Astrocyte of the cerebellum (primary cell): ENCODE measurements at regions of chr12 and their contacts with region 1.

Region 1: GRCh38 chr12:123471374-123472068 is 13.6 kb downstream of the SNRNP35 start:
- DNase-seq: peak; percentile 18
- H3K4me3 ChIP-seq: no peak overlapping the region
- CTCF ChIP-seq: no peak

Region 2: DNA sequence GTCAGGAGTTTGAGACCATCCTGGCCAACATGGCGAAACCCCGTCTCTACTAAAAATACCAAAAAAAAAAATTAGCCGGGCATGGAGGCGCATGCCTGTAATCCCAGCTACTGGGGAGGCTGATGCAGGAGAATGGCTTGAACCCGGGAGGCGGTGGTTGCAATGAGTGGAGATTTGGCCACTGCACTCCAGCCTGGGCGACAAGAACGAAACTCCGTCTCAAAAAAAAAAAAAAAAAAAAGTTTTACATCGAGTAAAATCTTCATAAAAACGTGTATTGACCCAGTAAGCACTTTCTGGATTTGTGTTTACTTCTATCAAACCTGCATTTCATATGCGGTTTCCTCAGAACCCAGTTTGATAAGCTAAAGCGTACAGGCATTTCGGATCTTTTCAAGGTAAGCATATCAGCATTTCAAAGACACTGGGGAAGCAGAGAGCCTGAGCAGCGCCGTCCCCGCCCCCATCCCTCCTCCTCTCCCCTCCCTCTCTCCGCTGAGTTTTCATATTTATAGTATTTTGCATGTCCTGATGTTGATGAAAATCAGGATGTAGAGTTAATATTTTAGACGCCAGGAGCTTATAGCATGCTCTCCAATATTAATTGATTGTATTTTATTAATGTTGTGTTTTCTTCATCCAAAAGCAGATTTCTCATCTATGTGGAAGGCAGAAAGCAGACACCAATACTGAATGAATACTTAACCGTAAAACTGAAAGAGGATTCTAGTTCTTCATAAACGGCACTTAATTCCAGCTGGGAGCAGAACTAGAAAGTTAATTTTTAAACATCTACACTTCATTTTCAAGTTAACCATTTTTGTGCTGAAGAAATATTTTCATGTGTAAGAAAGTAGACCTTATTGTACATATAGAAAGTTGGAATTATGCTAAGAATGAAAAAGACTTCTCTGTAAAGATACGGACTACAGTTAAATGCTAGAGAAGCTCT is 645.5 kb before region 1 on chr12:
- in situ Hi-C with region 1: no loop called
- DNase-seq: no peak
- H3K4me3 ChIP-seq: peak overlapping the region; percentile 36
- CTCF ChIP-seq: no peak

Region 3: GRCh38 chr12:123398550-123399254 is 72.8 kb before region 1 on chr12:
- in situ Hi-C with region 1: loop called (anchors 5 kb)
- DNase-seq: peak; percentile 72
- H3K4me3 ChIP-seq: no peak overlapping the region
- CTCF ChIP-seq: no peak

Region 4: GRCh38 chr12:123790905-123791467 is 319.5 kb after region 1 on chr12:
- in situ Hi-C with region 1: no loop called
- DNase-seq: no peak
- H3K4me3 ChIP-seq: no peak overlapping the region
- CTCF ChIP-seq: no peak

Region 5: DNA sequence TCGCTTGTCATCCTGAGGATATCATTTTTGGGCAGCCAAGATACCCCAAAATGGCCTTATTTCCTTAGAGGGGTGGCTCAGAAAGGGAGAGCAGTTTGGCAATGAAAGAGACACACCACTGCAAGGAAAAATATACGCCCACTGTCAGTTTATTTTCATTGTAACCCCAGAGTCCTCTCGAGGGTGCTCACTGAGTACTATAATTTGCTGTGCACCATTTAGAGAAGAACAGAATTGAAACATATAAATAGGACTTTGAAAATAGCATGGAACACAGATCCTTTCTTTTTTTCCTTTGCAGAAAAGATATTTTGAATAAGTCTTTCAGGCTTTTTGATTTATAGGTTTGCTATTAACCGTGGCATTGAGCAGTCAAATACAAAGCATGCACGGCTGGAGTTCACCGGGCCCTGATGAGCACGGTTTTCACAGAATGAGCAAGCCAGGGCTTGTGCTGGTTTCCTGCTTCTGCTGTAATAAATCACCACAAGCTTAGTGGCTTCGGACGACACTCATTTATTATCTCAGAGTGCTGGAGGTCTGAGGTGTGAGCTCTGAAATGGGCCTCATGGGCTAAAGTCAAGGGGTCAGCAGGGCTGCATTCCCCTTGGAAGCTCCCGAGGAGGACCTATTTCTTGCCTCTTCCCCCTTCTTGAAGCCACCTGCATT is 653.8 kb after region 1 on chr12:
- in situ Hi-C with region 1: no loop called
- DNase-seq: no peak
- H3K4me3 ChIP-seq: no peak overlapping the region
- CTCF ChIP-seq: no peak